Head of caudate nucleus (tissue), 42 donors: ENCODE measurements at regions of chr3 and their contacts with region 1.

Region 1: DNA sequence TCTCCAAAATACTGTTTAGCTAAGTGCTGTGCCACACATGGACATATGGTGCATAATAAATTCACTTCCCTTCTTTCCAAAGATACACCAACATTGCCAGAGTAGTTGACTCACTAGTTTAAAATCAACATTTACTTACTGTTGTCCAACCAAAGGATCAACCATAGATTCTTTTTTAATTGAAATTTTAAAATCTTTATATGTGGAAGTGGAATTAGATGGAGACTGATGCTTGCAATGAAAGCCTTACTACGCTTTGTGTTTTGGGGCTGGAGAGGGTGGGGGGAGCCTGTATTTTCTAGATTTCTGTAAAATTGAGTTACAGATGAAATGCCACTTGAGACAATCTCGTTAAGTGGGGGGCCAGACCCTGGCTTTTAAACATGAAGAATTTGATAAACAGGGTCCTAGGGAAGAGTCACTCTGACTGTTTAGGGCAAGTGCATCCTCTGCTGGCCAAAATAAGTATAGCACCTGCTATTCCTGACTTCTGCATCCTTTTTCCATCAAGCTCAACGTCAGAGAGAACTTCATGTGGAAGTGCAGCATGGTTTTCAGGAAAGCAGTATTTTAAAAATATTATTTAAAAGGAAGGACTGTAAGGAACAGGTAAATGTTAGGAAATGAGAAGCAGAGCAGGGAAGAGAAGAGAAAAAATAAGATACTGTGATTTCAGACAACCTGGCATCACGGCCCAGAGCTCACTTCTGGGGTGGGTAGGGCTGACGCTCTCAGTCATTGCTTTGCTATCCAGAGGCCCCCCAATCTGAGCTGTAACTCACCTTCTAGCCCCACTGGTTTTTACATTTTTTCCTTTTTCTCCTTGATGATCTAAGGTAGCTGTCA is 76.7 kb downstream of the BOC start:
- DNase-seq: peak in 33 of 42 donors; percentile 51 to 92 (median 73)

Region 2: GRCh38 chr3:113051787-113052186 is 236.2 kb before region 1 on chr3:
- intact Hi-C with region 1: loop called (anchors 2 kb)
- DNase-seq: peak in 9 of 42 donors; percentile 8 to 23 (median 13)

Region 3: DNA sequence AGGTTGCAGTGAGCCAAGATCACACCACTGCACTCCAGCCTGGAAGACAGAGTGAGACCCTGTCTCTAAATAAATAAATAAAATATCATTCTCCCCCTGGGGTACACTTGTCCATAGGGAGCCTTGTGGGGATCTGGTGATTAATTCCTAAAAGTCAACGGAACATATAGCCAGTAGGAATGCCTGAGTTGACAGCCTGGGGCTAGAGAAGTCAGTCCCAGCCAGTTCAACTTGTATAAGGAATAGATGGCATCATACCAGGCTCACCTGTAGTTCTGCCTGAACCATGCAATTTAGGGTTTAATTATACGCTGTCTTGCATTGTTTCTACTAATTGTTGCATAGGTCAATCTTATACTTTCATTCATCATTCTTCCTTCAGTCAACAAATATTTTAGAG is 82.5 kb before region 1 on chr3:
- intact Hi-C with region 1: no loop called
- DNase-seq: no peak

Region 4: DNA sequence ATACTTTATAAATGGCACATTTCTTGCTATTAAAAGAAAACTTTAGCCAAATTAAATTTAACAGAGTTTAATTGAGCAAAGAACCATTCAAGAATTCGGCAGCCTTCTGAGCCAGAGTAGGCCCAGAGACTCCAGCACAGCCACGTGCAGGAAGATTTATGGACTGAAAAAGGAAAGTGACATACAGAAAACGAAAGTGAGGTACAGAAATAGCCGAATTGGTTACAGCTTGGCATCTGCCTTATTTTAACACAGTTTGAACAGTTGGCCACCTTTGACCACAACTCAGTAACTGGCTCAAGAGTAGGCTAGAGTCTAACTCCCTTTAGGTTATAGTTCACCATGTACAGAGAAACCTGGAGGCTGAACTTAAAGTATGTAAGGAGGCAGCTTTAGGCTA is 135.7 kb after region 1 on chr3:
- intact Hi-C with region 1: no loop called
- DNase-seq: no peak